PC-9 (cell line): ENCODE measurements at regions of chr1 and their contacts with region 1.

Region 1: GRCh38 chr1:239792157-239792556 is 299.5 kb upstream of the FMN2 start:
- DNase-seq: no peak
- H3K4me3 ChIP-seq: no peak overlapping the region
- H3K27ac ChIP-seq: no peak overlapping the region
- H3K4me1 ChIP-seq: no peaks in the 10 kb centered on the region
- H3K27me3 ChIP-seq: no peaks in the 10 kb centered on the region
- CTCF ChIP-seq: no peak

Region 2: GRCh38 chr1:239184561-239185244 is 607.5 kb before region 1 on chr1:
- CTCF ChIA-PET with region 1: no interaction called
- POLR2A ChIA-PET with region 1: interaction called, 30 read pairs
- intact Hi-C with region 1: no loop called
- DNase-seq: no peak
- H3K4me3 ChIP-seq: no peak overlapping the region
- H3K27ac ChIP-seq: no peak overlapping the region
- H3K4me1 ChIP-seq: no peaks in the 10 kb centered on the region
- H3K27me3 ChIP-seq: no peaks in the 10 kb centered on the region
- CTCF ChIP-seq: no peak

Region 3: DNA sequence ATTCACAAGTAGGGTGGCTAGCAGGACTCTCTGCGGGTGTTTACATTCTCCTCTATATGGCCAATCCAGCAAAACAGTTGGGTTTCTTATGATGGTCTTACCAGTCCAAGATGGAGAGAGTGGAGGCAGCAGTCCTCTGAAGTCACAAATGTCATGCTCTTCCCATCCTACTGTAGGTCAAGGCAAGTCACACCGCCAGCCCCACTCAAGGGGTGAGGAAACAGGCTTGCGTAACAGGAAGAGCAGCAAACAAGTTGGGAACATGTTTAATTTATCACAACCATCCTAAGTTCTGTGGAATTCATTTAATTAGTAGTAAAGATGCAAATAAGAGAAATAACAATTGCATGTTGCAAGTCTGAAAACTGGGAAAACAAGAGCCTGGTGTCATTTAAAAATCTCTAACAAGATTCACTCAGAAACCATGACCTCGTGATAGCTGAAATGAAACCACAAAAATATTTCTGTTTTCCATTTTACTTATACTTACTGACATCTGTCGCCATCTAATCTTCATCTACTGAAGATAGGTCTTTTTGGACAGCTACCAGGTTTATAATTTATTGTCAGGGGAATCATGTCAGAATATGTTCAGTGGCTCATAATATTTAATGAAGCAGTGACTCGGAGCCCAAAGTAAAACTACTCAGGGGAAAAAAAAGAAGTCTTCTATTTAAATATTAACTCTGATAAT is 49.6 kb before region 1 on chr1:
- CTCF ChIA-PET with region 1: no interaction called
- POLR2A ChIA-PET with region 1: no interaction called
- intact Hi-C with region 1: no loop called
- DNase-seq: no peak
- H3K4me3 ChIP-seq: no peak overlapping the region
- H3K27ac ChIP-seq: no peak overlapping the region
- H3K4me1 ChIP-seq: no peaks in the 10 kb centered on the region
- H3K27me3 ChIP-seq: no peaks in the 10 kb centered on the region
- CTCF ChIP-seq: no peak

Region 4: GRCh38 chr1:239914751-239915231 is 122.6 kb after region 1 on chr1:
- CTCF ChIA-PET with region 1: no interaction called
- POLR2A ChIA-PET with region 1: no interaction called
- intact Hi-C with region 1: no loop called
- DNase-seq: no peak
- H3K4me3 ChIP-seq: no peak overlapping the region
- H3K27ac ChIP-seq: no peak overlapping the region
- H3K4me1 ChIP-seq: no peaks in the 10 kb centered on the region
- H3K27me3 ChIP-seq: no peaks in the 10 kb centered on the region
- CTCF ChIP-seq: no peak